HCT116 (cell line): ENCODE measurements at regions of chr7 and their contacts with region 1.

Region 1: GRCh38 chr7:7996576-7996975 is 28.0 kb downstream of the GLCCI1 start:
- DNase-seq: no peak
- ATAC-seq: peak; percentile 52; the same call in 1 of the 2 replicates
- H3K4me3 ChIP-seq: no peak overlapping the region
- H3K27ac ChIP-seq: no peak overlapping the region
- H3K4me1 ChIP-seq: peaks cover 11 to 12% of the 10 kb centered on the region in 2 experiments
- H3K27me3 ChIP-seq: no peaks in the 10 kb centered on the region
- CTCF ChIP-seq: no peak
- POLR2A ChIP-seq: no peak
- RAD21 ChIP-seq: no peak

Region 2: GRCh38 chr7:7212612-7213011 is 784.0 kb before region 1 on chr7:
- CTCF ChIA-PET with region 1: no interaction called
- POLR2A ChIA-PET with region 1: no interaction called
- RAD21 ChIA-PET with region 1: no interaction called
- intact Hi-C with region 1: no loop called
- DNase-seq: no peak
- ATAC-seq: no peak
- H3K4me3 ChIP-seq: no peak overlapping the region
- H3K27ac ChIP-seq: no peak overlapping the region
- H3K4me1 ChIP-seq: no peaks in the 10 kb centered on the region
- H3K27me3 ChIP-seq: no peaks in the 10 kb centered on the region
- CTCF ChIP-seq: no peak
- POLR2A ChIP-seq: no peak
- RAD21 ChIP-seq: no peak

Region 3: GRCh38 chr7:7968543-7969305 is 27.9 kb before region 1 on chr7 and contains the start of gene GLCCI1:
- CTCF ChIA-PET with region 1: no interaction called
- POLR2A ChIA-PET with region 1: no interaction called
- RAD21 ChIA-PET with region 1: no interaction called
- intact Hi-C with region 1: loop called (anchors 2 kb)
- DNase-seq: peak; percentile 92
- ATAC-seq: peak; percentile 96
- H3K4me3 ChIP-seq: peak within 1 kb of the TSS; percentile 57 to 69
- H3K27ac ChIP-seq: peak within 1 kb of the TSS; percentile 78; the same call in 1 of the 2 replicates
- H3K4me1 ChIP-seq: peaks cover 3 to 16% of the 10 kb centered on the region in 2 experiments; a peak in 3 of 4 replicates
- H3K27me3 ChIP-seq: no peaks in the 10 kb centered on the region
- CTCF ChIP-seq: no peak
- POLR2A ChIP-seq: peak; percentile 51
- RAD21 ChIP-seq: no peak
- total RNA-seq, gene GLCCI1: 4.6 TPM